ENCODE measurements at regions of chr18 and their contacts with region 1.

Region 1: GRCh38 chr18:46281185-46282176 is 177.3 kb downstream of the HAUS1 start:
- DNase-seq: peak; percentile 69
- H3K4me3 Mint-ChIP-seq: no peak overlapping the region
- H3K27ac Mint-ChIP-seq: no peak overlapping the region
- H3K4me1 Mint-ChIP-seq: peaks cover 11% of the 10 kb centered on the region
- H3K27me3 Mint-ChIP-seq: no peaks in the 10 kb centered on the region

Region 2: GRCh38 chr18:46148810-46149209 is 132.7 kb before region 1 on chr18:
- CTCF ChIA-PET with region 1: interaction called, 26 read pairs
- POLR2A ChIA-PET with region 1: no interaction called
- DNase-seq: peak; percentile 60
- H3K4me3 Mint-ChIP-seq: no peak overlapping the region
- H3K27ac Mint-ChIP-seq: peak overlapping the region; percentile 45
- H3K4me1 Mint-ChIP-seq: peaks cover 34% of the 10 kb centered on the region
- H3K27me3 Mint-ChIP-seq: peaks cover 2% of the 10 kb centered on the region

Region 3: GRCh38 chr18:46268671-46269070 is 12.8 kb before region 1 on chr18:
- CTCF ChIA-PET with region 1: interaction called, 15 read pairs
- POLR2A ChIA-PET with region 1: no interaction called
- DNase-seq: no peak
- H3K4me3 Mint-ChIP-seq: no peak overlapping the region
- H3K27ac Mint-ChIP-seq: peak overlapping the region; percentile 59
- H3K4me1 Mint-ChIP-seq: peaks cover 50% of the 10 kb centered on the region
- H3K27me3 Mint-ChIP-seq: no peaks in the 10 kb centered on the region

Region 4: DNA sequence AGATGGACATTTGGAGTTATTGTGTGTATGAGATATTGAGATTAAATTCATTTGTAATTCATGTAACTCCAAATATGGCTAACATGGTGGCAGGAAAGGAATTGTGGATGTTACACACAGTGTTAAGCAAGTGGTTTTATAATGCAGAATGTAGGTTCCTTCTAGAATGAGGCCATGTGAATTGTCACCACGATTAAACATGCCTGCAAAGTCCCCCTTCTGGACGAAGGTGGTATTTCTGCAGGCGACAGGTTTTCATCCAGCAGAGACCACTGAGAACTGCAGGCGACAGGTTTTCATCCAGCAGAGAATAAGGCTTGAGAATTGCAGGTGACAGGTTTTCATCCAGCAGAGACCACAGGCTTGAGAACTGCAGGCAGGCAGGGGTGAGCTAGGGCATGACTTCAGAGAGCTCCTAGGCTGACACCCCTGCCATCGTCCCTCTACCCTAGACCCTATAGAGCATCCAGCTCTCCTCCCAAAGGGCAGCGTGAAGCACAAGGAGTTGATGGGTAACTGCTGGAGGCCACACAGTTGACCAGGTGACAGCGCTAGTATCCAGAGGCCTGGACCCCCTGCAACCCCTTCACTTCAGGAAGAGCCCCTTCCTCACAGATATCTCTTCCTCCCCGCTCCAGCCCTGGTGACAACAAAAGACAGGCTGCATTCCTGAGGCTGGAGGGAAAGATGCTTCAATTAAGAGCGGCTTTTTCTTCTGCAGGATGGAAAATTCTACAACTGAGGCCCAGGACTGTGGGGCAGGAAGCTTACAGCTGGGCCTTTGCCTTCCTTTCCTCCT is 199.8 kb after region 1 on chr18:
- CTCF ChIA-PET with region 1: interaction called, 24 read pairs
- POLR2A ChIA-PET with region 1: no interaction called
- DNase-seq: peak; percentile 64
- H3K4me3 Mint-ChIP-seq: no peak overlapping the region
- H3K27ac Mint-ChIP-seq: no peak overlapping the region
- H3K4me1 Mint-ChIP-seq: no peaks in the 10 kb centered on the region
- H3K27me3 Mint-ChIP-seq: peaks cover 15% of the 10 kb centered on the region

Region 5: DNA sequence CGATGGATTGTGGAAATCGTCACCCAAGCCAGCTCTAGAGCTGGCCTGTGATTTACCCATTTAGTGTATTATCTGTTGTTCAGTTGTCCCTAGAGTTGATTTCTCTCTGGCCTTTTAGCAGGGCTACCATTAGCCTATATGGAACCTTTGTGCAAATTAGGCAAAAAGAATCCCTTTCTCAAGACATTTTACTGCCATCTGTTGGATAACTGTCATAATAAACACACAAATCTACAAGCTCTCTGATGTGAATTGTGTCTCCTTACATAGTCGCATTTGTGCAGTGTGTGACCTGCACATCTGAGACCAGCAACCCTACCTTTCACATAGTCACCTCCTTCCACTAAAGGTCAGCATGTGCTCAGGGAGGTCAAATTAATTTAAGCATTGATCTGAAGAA is 341.5 kb after region 1 on chr18:
- CTCF ChIA-PET with region 1: interaction called, 19 read pairs
- POLR2A ChIA-PET with region 1: no interaction called
- DNase-seq: no peak
- H3K4me3 Mint-ChIP-seq: no peak overlapping the region
- H3K27ac Mint-ChIP-seq: peak overlapping the region; percentile 51
- H3K4me1 Mint-ChIP-seq: peaks cover 33% of the 10 kb centered on the region
- H3K27me3 Mint-ChIP-seq: peaks cover 11% of the 10 kb centered on the region

Region 6: GRCh38 chr18:46660955-46661749 is 379.7 kb after region 1 on chr18:
- CTCF ChIA-PET with region 1: interaction called, 78 read pairs
- POLR2A ChIA-PET with region 1: no interaction called
- DNase-seq: no peak
- H3K4me3 Mint-ChIP-seq: no peak overlapping the region
- H3K27ac Mint-ChIP-seq: no peak overlapping the region
- H3K4me1 Mint-ChIP-seq: no peaks in the 10 kb centered on the region
- H3K27me3 Mint-ChIP-seq: peaks cover 4% of the 10 kb centered on the region

Measured in activated CD4-positive, alpha-beta memory T cell treated with anti-CD3 and anti-CD28 coated beads, Interleukin-2, amount 10 ng/mL, durations not matched to agents 7 days and 5 days (primary cell).